B cell (primary cell): ENCODE measurements at regions of chrX and their contacts with region 1.

Region 1: DNA sequence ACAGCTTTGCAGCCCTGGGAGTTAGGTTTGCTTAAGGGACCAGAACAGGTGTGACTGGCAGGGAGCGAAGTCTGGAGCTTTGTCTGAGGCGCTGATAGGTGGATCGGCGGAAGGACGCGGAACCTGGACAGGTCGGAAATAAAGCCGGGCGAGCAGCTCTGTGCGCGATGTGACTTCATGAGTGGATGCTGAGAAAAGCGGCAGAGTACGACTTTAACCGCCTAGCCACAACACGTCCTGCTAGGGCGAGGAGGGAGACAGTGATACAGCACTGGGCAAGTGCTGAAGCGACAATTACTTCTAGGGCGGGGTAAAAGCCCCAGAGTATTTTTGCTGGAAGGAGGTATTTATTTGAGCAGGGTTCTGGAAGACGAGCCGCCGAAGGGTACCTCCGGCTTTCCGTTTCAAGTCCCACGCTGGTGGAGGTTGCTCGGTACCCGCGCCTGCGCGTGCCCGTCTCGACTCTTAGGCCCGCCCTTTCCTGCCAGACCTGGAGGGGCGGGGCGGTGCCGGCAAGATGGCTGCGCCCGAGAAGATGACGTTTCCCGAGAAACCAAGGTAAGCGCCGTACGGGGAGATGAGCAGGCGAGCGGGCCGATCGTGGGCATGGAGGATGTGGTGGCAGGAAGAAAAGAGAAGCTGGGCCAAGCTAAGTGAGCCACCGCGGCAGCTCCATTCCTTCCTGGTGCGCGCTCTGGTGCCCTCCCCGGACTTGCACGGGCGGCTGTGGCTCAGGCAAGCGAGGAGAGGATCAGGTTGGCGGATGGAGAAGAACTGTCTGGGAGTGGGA is at the start of gene ZRSR2:
- DNase-seq: peak; percentile 89
- ATAC-seq: peak; percentile 92
- H3K4me3 ChIP-seq: peak within 1 kb of the TSS; percentile 74 to 98 (median 88)
- H3K4me3 Mint-ChIP-seq: no peak within 1 kb of the TSS
- H3K27ac ChIP-seq: peak within 1 kb of the TSS; percentile 88 to 95
- H3K27ac Mint-ChIP-seq: no peak within 1 kb of the TSS
- H3K4me1 ChIP-seq: peaks cover 25 to 27% of the 10 kb centered on the region in 2 donors
- H3K4me1 Mint-ChIP-seq: peaks cover 20% of the 10 kb centered on the region
- H3K27me3 ChIP-seq: no peaks in the 10 kb centered on the region
- H3K27me3 Mint-ChIP-seq: no peaks in the 10 kb centered on the region
- CTCF ChIP-seq: no peak
- total RNA-seq, gene ZRSR2: 27.8 and 28.2 TPM in 2 replicates

Region 2: GRCh38 chrX:14872851-14873675 is 917.1 kb before region 1 on chrX and contains the starts of genes FANCB and MOSPD2:
- CTCF ChIA-PET with region 1: no interaction called
- POLR2A ChIA-PET with region 1: no interaction called
- intact Hi-C with region 1: loop called (anchors 5 kb)
- DNase-seq: peak; percentile 94
- ATAC-seq: peak; percentile 91
- H3K4me3 ChIP-seq: peak within 1 kb of the TSS; percentile 69 to 89 (median 75)
- H3K4me3 Mint-ChIP-seq: peak within 1 kb of the TSS; percentile 92
- H3K27ac ChIP-seq: peak within 1 kb of the TSS; percentile 80 to 85
- H3K27ac Mint-ChIP-seq: peak within 1 kb of the TSS; percentile 93
- H3K4me1 ChIP-seq: peaks cover 7 to 11% of the 10 kb centered on the region in 2 donors
- H3K4me1 Mint-ChIP-seq: peaks cover 13% of the 10 kb centered on the region
- H3K27me3 ChIP-seq: no peaks in the 10 kb centered on the region
- H3K27me3 Mint-ChIP-seq: no peaks in the 10 kb centered on the region
- CTCF ChIP-seq: no peak
- total RNA-seq, gene FANCB: 3.9 and 7.6 TPM in 2 replicates
- total RNA-seq, gene MOSPD2: 23.1 and 27.0 TPM in 2 replicates

Region 3: GRCh38 chrX:15335135-15336022 is 454.8 kb before region 1 on chrX and contains the start of gene PIGA:
- CTCF ChIA-PET with region 1: no interaction called
- POLR2A ChIA-PET with region 1: no interaction called
- intact Hi-C with region 1: loop called (anchors 10 kb)
- DNase-seq: peak; percentile 94
- ATAC-seq: peak; percentile 91
- H3K4me3 ChIP-seq: peak within 1 kb of the TSS; percentile 65 to 93 (median 74)
- H3K4me3 Mint-ChIP-seq: peak within 1 kb of the TSS; percentile 92
- H3K27ac ChIP-seq: peak within 1 kb of the TSS; percentile 84 to 95
- H3K27ac Mint-ChIP-seq: peak within 1 kb of the TSS; percentile 94
- H3K4me1 ChIP-seq: peaks cover 4 to 15% of the 10 kb centered on the region in 2 donors
- H3K4me1 Mint-ChIP-seq: peaks cover 20% of the 10 kb centered on the region
- H3K27me3 ChIP-seq: peaks cover 0 to 15% (median 1%) of the 10 kb centered on the region in 4 experiments
- H3K27me3 Mint-ChIP-seq: peaks cover 8% of the 10 kb centered on the region
- CTCF ChIP-seq: no peak
- total RNA-seq, gene PIGA: 25.7 and 26.0 TPM in 2 replicates

Region 4: GRCh38 chrX:15674841-15675489 is 115.2 kb before region 1 on chrX:
- CTCF ChIA-PET with region 1: no interaction called
- POLR2A ChIA-PET with region 1: no interaction called
- intact Hi-C with region 1: loop called (anchors 1 kb)
- DNase-seq: peak; percentile 96
- ATAC-seq: peak; percentile 81
- H3K4me3 ChIP-seq: peak overlapping the region; percentile 67 to 99 (median 80)
- H3K4me3 Mint-ChIP-seq: no peak overlapping the region
- H3K27ac ChIP-seq: peak overlapping the region; percentile 98 to 100
- H3K27ac Mint-ChIP-seq: no peak overlapping the region
- H3K4me1 ChIP-seq: peaks cover 16 to 17% of the 10 kb centered on the region in 2 donors
- H3K4me1 Mint-ChIP-seq: peaks cover 15% of the 10 kb centered on the region
- H3K27me3 ChIP-seq: no peaks in the 10 kb centered on the region
- H3K27me3 Mint-ChIP-seq: no peaks in the 10 kb centered on the region
- CTCF ChIP-seq: no peak

Region 5: GRCh38 chrX:15718283-15718970 is 71.7 kb before region 1 on chrX:
- CTCF ChIA-PET with region 1: no interaction called
- POLR2A ChIA-PET with region 1: no interaction called
- intact Hi-C with region 1: no loop called
- DNase-seq: no peak
- ATAC-seq: no peak
- H3K4me3 ChIP-seq: no peak overlapping the region
- H3K4me3 Mint-ChIP-seq: no peak overlapping the region
- H3K27ac ChIP-seq: no peak overlapping the region
- H3K27ac Mint-ChIP-seq: no peak overlapping the region
- H3K4me1 ChIP-seq: no peaks in the 10 kb centered on the region
- H3K4me1 Mint-ChIP-seq: no peaks in the 10 kb centered on the region
- H3K27me3 ChIP-seq: no peaks in the 10 kb centered on the region
- H3K27me3 Mint-ChIP-seq: no peaks in the 10 kb centered on the region
- CTCF ChIP-seq: no peak

Region 6: DNA sequence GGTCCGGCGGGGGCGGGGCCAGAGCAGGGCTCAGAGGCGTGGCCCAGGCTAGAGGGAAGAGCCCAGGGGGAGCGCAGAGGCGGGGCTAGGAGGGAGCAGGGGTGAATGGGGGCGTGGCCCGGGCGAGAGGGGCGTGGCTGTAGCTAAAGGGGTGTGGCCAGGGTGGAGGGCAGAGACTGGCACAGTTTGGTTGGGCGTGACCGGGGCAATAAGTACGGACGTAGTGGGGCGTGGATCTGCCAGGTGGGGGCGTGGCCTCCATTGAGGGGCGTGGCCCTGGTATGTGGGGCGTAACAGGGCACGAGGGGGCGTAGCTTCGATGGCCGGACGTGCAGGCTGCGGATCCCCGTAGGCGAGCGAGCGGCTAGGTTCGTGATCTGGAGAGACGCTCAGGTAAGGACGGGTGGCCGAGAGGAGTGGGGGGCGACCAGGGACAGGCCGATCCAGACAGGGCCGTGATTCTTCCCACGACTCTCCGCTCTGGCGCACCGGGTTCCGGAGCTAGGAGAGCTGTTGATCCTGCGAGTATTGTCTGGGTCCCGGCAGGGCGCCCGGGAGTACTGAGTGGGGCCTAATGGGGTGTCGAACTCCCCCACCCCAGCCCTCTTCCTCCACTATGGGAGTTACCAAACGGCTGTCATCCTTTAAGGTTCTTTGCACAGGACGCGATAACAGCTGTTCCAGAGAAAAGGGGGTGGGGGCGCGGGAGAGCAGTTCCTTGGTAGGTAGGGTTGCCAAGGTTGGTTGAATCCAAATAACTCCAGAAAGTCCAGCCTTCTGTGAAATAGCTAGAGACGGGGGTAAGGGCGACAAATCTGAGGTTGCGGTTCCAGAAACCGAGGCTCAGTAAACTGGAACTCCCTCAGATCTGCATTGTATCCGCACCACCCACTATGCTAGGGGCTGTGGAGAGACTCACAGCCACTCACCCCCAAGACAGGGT is 51.9 kb before region 1 on chrX and contains the start of gene CA5B:
- CTCF ChIA-PET with region 1: interaction called, 4 read pairs
- POLR2A ChIA-PET with region 1: interaction called, 9 read pairs
- intact Hi-C with region 1: loop called (anchors 1 kb)
- DNase-seq: peak; percentile 95
- ATAC-seq: peak; percentile 94
- H3K4me3 ChIP-seq: peak within 1 kb of the TSS; percentile 17 to 84 (median 72)
- H3K4me3 Mint-ChIP-seq: peak within 1 kb of the TSS; percentile 95
- H3K27ac ChIP-seq: peak within 1 kb of the TSS; percentile 42 to 58
- H3K27ac Mint-ChIP-seq: peak within 1 kb of the TSS; percentile 91
- H3K4me1 ChIP-seq: peaks cover 18 to 19% of the 10 kb centered on the region in 2 donors
- H3K4me1 Mint-ChIP-seq: peaks cover 35% of the 10 kb centered on the region
- H3K27me3 ChIP-seq: no peaks in the 10 kb centered on the region
- H3K27me3 Mint-ChIP-seq: no peaks in the 10 kb centered on the region
- CTCF ChIP-seq: no peak
- total RNA-seq, gene CA5B: 17.2 and 17.7 TPM in 2 replicates

Region 7: GRCh38 chrX:15749642-15750610 is 40.2 kb before region 1 on chrX:
- CTCF ChIA-PET with region 1: no interaction called
- POLR2A ChIA-PET with region 1: interaction called, 3 read pairs
- intact Hi-C with region 1: loop called (anchors 5 kb)
- DNase-seq: peak; percentile 60
- ATAC-seq: peak; percentile 70
- H3K4me3 ChIP-seq: peak overlapping the region in 2 of 5 experiments; percentile 21 to 46
- H3K4me3 Mint-ChIP-seq: peak overlapping the region; percentile 58
- H3K27ac ChIP-seq: peak overlapping the region; percentile 94 to 97
- H3K27ac Mint-ChIP-seq: peak overlapping the region; percentile 99
- H3K4me1 ChIP-seq: peaks cover 31 to 39% of the 10 kb centered on the region in 2 donors
- H3K4me1 Mint-ChIP-seq: peaks cover 53% of the 10 kb centered on the region
- H3K27me3 ChIP-seq: no peaks in the 10 kb centered on the region
- H3K27me3 Mint-ChIP-seq: no peaks in the 10 kb centered on the region
- CTCF ChIP-seq: no peak